ENCODE measurements at regions of chr15 and their contacts with region 1.

Region 1: DNA sequence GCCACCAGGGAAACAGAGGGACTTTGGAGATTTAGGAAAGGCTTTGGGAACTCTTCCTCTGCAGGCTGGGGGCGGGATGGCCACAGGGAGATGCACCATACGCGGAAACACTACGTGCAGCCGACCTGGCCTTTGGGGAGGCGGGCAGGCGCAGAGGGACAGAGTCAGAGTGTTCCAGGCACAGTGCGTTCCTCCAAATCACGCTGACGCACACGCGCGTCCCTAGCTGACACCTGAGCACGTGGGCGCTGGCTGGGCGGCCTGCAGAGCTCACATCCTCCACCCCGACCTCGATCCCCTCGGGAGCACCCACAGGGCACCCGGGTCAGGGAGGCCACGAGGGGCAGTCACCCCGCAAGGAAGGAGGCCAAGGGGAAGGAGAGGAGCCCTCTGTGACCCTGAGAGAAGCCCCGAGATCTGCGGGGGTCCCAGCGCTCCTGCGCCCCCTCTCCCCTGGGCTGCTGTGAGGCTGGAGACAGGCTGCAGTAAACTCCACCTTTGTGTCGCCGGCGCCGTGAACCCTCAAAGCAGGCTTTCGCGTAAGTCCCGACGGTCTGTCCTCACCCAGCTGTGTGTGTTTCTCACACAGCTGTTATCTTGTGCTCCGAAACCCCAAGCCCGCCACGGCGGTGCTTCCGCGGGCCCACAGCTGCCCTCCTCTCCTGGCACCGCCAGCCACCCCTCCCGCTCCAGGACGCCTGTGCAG is 196.3 kb downstream of the OCA2 start:
- DNase-seq: no peak
- H3K4me3 ChIP-seq: no peak overlapping the region
- H3K27ac ChIP-seq: no peak overlapping the region
- H3K4me1 ChIP-seq: no peaks in the 10 kb centered on the region
- H3K27me3 ChIP-seq: no peaks in the 10 kb centered on the region
- CTCF ChIP-seq: no peak

Region 2: GRCh38 chr15:27278761-27279160 is 624.1 kb before region 1 on chr15:
- CTCF ChIA-PET with region 1: no interaction called
- dilution Hi-C with region 1: no loop called
- in situ Hi-C with region 1: no loop called
- intact Hi-C with region 1: no loop called
- DNase-seq: no peak
- H3K4me3 ChIP-seq: no peak overlapping the region
- H3K27ac ChIP-seq: no peak overlapping the region
- H3K4me1 ChIP-seq: no peaks in the 10 kb centered on the region
- H3K27me3 ChIP-seq: no peaks in the 10 kb centered on the region
- CTCF ChIP-seq: no peak

Region 3: GRCh38 chr15:27679731-27680471 is 222.9 kb before region 1 on chr15:
- CTCF ChIA-PET with region 1: no interaction called
- dilution Hi-C with region 1: loop called (anchors 25 kb)
- in situ Hi-C with region 1: no loop called
- intact Hi-C with region 1: no loop called
- DNase-seq: no peak
- H3K4me3 ChIP-seq: no peak overlapping the region
- H3K27ac ChIP-seq: no peak overlapping the region
- H3K4me1 ChIP-seq: no peaks in the 10 kb centered on the region
- H3K27me3 ChIP-seq: no peaks in the 10 kb centered on the region
- CTCF ChIP-seq: no peak

Region 4: DNA sequence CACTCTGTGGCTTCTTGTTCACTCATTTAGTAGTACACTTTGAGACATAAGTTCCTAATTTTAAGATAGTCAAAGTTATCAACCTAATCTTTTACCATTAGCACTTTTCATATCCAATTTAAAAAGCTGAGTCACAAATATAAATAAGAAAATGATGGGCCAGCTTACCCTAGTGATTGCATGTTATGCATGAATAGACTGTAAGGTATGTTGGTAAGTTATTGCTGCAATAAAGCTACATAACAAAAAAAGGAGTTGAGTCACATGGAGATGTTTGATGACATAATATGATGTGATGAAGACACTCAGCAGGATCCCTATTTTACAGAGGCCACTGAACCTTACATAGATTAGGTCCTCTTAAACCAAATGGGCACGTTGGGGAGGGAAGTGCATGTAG is 35.0 kb after region 1 on chr15:
- CTCF ChIA-PET with region 1: no interaction called
- dilution Hi-C with region 1: no loop called
- in situ Hi-C with region 1: no loop called
- intact Hi-C with region 1: no loop called
- DNase-seq: no peak
- H3K4me3 ChIP-seq: no peak overlapping the region
- H3K27ac ChIP-seq: no peak overlapping the region
- H3K4me1 ChIP-seq: no peaks in the 10 kb centered on the region
- H3K27me3 ChIP-seq: no peaks in the 10 kb centered on the region
- CTCF ChIP-seq: no peak

Measured in mammary epithelial cell (primary cell).